Aorta (tissue), 5 donors: ENCODE measurements at regions of chr2 and their contacts with region 1.

Region 1: GRCh38 chr2:46555011-46555410 is 75.6 kb downstream of the TMEM247 start:
- DNase-seq: no peak
- ATAC-seq: no peak
- H3K4me3 ChIP-seq: no peak overlapping the region
- H3K27ac ChIP-seq: no peak overlapping the region
- H3K4me1 ChIP-seq: peaks cover 0 to 5% of the 10 kb centered on the region in 2 donors
- H3K27me3 ChIP-seq: no peaks in the 10 kb centered on the region

Region 2: DNA sequence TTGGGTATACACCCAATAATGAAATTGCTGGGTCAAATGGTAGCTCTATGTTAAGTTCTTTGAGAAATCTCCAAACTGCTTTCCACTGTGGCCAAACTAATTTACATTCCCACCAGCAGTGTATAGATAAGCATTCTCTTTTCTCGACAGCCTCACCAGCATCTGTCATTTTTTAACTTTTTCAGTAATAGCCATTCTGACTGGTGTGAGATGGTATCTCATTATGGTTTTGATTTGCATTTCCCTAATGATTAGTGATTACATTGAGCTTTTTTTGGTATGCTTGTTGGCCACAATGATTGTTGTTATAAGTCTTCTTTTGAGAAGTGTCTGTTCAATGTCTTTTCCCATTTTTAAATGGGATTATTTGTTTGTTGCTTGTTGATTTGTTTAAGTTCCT is 308.2 kb before region 1 on chr2:
- intact Hi-C with region 1: no loop called
- DNase-seq: no peak
- ATAC-seq: no peak
- H3K4me3 ChIP-seq: no peak overlapping the region
- H3K27ac ChIP-seq: no peak overlapping the region
- H3K4me1 ChIP-seq: no peaks in the 10 kb centered on the region
- H3K27me3 ChIP-seq: no peaks in the 10 kb centered on the region

Region 3: GRCh38 chr2:46601328-46601963 is 46.4 kb after region 1 on chr2:
- intact Hi-C with region 1: loop called in 1 of 2 experiments (anchors 5 kb)
- DNase-seq: no peak
- ATAC-seq: no peak
- H3K4me3 ChIP-seq: no peak overlapping the region
- H3K27ac ChIP-seq: no peak overlapping the region
- H3K4me1 ChIP-seq: no peaks in the 10 kb centered on the region
- H3K27me3 ChIP-seq: no peaks in the 10 kb centered on the region

Region 4: GRCh38 chr2:46866770-46867246 is 311.8 kb after region 1 on chr2:
- intact Hi-C with region 1: no loop called
- DNase-seq: no peak
- ATAC-seq: peak; percentile 22
- H3K4me3 ChIP-seq: no peak overlapping the region
- H3K27ac ChIP-seq: no peak overlapping the region
- H3K4me1 ChIP-seq: no peaks in the 10 kb centered on the region
- H3K27me3 ChIP-seq: no peaks in the 10 kb centered on the region